Mammary epithelial cell (primary cell): ENCODE measurements at regions of chr17 and their contacts with region 1.

Region 1: DNA sequence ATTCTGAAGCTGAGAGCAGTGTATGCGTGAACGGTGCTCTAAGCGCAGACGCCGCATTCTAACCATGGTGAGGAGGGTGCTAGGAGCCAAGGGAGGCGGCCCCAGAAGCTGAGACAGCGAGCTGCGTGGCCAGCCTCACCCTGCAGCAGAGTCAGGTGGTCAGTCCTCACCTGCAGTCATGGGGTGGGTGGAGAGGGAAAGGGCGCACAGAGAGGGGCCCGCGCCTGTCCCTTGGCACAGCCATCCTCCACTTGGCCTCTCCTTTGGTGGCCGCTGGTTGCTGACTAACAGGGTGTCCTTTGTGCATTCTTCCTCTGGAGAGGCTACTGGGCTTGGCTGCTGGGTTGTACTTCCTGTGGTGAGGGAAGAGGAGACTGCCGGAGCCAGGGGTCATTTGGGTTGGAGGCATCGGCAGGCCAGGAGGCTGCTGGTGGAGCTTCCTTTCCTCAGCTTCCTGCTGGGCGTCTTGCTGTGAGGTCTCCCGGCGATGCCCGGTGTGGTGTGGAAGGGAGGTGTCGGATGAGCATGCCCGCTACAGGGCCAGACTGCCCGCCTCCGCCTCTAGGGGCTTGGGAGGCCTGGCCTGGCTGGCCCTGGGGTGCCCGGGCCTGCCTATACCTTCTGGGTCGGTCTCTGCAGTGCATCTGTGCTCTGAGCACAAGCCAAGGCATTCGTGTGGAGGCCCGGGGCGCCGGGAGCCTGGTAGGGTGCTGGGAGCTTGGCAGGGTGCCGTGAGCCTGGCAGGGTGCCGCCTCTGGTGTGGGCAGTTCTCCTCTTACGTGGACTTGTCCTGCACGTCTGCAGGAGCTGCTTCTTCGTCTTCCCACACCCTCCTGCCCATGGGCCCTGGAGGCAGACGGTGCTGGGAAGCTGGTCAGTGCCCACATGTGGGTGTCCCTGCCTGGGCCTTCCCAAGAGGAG is 17.4 kb downstream of the RNF213 start:
- DNase-seq: peak; percentile 84
- H3K4me3 ChIP-seq: peak overlapping the region in 2 of 3 experiments; percentile 32
- H3K27ac ChIP-seq: peak overlapping the region; percentile 45
- H3K4me1 ChIP-seq: peaks cover 35% of the 10 kb centered on the region
- H3K27me3 ChIP-seq: no peaks in the 10 kb centered on the region
- CTCF ChIP-seq: peak in 1 of 2 donors; percentile 26

Region 2: GRCh38 chr17:80261159-80261997 is 16.6 kb before region 1 on chr17:
- CTCF ChIA-PET with region 1: no interaction called
- dilution Hi-C with region 1: no loop called
- in situ Hi-C with region 1: no loop called
- intact Hi-C with region 1: loop called (anchors 1 kb)
- DNase-seq: peak; percentile 57
- H3K4me3 ChIP-seq: peak overlapping the region; percentile 87 to 96 (median 95)
- H3K27ac ChIP-seq: peak overlapping the region; percentile 85
- H3K4me1 ChIP-seq: peaks cover 28% of the 10 kb centered on the region
- H3K27me3 ChIP-seq: no peaks in the 10 kb centered on the region
- CTCF ChIP-seq: no peak

Region 3: DNA sequence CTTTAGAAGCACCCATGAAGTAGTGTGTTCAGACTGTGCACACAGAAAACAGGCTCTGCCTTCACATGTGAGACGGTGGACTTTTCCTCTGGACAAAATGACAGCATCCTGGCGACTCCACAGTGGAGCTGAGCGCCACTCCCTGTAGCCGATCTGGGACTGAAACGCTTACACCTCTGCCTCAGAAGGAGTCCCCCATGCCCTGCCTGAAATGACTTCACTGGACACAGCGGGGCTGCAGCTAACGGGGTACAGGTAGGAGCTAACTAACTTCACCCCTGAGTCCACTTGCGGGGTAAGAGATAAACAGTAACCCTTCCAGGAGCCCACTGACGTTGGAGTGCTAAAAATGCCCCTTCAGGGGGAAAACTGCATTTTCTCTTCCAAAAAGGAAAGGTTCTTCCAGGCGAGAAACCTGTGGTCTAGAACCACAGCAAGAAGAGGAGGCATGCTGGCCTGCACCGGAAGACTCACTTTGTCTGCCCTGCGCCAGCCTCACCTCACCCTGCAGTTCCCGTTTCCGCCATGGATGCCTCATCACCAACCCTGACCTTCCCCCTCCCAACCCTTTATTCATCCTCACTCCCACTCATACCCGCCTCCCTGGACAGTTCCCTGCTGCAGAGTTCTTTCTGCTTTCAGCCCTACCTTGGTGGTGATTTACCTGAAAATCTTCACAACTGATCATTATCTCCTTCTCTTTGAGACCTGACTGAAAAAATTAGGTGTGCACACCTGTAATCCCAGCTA is 117.6 kb after region 1 on chr17:
- CTCF ChIA-PET with region 1: no interaction called
- dilution Hi-C with region 1: no loop called
- in situ Hi-C with region 1: no loop called
- intact Hi-C with region 1: no loop called
- DNase-seq: no peak
- H3K4me3 ChIP-seq: no peak overlapping the region
- H3K27ac ChIP-seq: no peak overlapping the region
- H3K4me1 ChIP-seq: no peaks in the 10 kb centered on the region
- H3K27me3 ChIP-seq: no peaks in the 10 kb centered on the region
- CTCF ChIP-seq: no peak